ENCODE measurements at regions of chr2 and their contacts with region 1.

Region 1: DNA sequence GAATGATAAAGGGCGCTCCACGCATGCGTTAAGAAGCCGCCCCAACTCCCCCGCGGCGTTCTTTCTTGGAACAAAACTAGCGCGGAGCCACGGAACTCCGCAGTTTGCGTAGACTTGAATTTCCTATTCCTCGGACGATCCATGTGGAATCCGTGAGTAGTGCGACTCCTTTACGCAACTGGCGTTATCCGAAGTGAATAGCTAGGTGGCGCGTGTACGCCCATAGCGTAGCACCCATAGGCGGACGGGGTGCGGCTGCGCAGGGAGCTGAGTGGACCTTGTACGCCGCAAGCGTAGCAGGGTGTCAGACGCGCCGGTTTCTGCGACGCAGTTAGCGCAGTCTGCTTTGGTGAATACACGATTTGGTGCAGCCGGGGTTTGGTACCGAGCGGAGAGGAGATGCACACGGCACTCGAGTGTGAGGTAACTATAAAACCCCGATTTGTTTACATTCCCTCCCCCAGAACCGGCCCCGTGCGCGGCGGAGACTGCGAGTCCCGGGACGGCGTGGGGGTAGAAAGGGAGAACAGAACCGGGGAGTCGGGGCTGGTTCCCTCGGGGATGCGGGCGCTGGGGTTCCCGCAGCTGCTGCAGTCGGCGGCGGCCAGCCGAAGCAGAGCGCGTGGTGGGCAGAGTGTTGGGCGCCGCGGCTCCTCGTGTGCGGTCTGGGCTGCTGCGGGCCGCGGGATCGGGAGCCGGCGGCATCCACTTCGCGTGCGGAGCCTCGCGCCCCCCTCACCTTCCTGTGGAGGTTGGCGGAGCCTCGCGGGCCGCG is at the start of gene SLC39A10:
- DNase-seq: peak; percentile 99
- H3K4me3 Mint-ChIP-seq: peak within 1 kb of the TSS; percentile 98
- H3K27ac Mint-ChIP-seq: peak within 1 kb of the TSS; percentile 100
- H3K4me1 Mint-ChIP-seq: peaks cover 35% of the 10 kb centered on the region
- H3K27me3 Mint-ChIP-seq: peaks cover 3% of the 10 kb centered on the region
- total RNA-seq, gene SLC39A10: 36.1 to 37.4 TPM

Region 2: DNA sequence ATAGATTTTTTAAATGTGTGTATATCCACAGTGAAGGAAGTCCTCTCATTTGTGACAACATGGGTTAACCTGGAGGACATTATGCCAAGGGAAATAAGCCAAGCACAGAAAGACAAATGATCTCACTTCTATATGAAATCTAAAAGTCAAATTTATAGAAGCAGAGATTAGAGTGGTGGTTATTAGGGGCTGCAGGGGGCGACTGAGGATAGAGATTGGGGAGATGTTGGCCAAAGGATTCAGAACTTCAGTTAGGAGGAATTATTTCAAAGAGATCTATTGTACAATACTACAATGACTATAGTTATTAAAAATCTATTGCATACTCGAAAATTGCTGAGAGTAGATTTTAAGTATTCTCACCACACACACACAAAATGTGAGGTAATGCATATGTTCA is 252.4 kb before region 1 on chr2:
- CTCF ChIA-PET with region 1: interaction called, 4 read pairs
- POLR2A ChIA-PET with region 1: no interaction called
- intact Hi-C with region 1: loop called (anchors 2 kb)
- DNase-seq: no peak
- H3K4me3 Mint-ChIP-seq: no peak overlapping the region
- H3K27ac Mint-ChIP-seq: no peak overlapping the region
- H3K4me1 Mint-ChIP-seq: peaks cover 8% of the 10 kb centered on the region
- H3K27me3 Mint-ChIP-seq: no peaks in the 10 kb centered on the region

Region 3: GRCh38 chr2:195533771-195534642 is 123.0 kb before region 1 on chr2:
- CTCF ChIA-PET with region 1: interaction called, 60 read pairs
- POLR2A ChIA-PET with region 1: interaction called, 90 read pairs
- intact Hi-C with region 1: loop called (anchors 1 kb)
- DNase-seq: peak; percentile 87
- H3K4me3 Mint-ChIP-seq: peak overlapping the region; percentile 74
- H3K27ac Mint-ChIP-seq: peak overlapping the region; percentile 98
- H3K4me1 Mint-ChIP-seq: peaks cover 80% of the 10 kb centered on the region
- H3K27me3 Mint-ChIP-seq: no peaks in the 10 kb centered on the region

Region 4: GRCh38 chr2:195575879-195576401 is 81.1 kb before region 1 on chr2:
- CTCF ChIA-PET with region 1: interaction called, 19 read pairs
- POLR2A ChIA-PET with region 1: interaction called, 4 read pairs
- intact Hi-C with region 1: loop called (anchors 1 kb)
- DNase-seq: no peak
- H3K4me3 Mint-ChIP-seq: no peak overlapping the region
- H3K27ac Mint-ChIP-seq: peak overlapping the region; percentile 64
- H3K4me1 Mint-ChIP-seq: peaks cover 68% of the 10 kb centered on the region
- H3K27me3 Mint-ChIP-seq: no peaks in the 10 kb centered on the region

Region 5: GRCh38 chr2:195732574-195732973 is 75.5 kb after region 1 on chr2:
- CTCF ChIA-PET with region 1: no interaction called
- POLR2A ChIA-PET with region 1: no interaction called
- intact Hi-C with region 1: no loop called
- DNase-seq: no peak
- H3K4me3 Mint-ChIP-seq: no peak overlapping the region
- H3K27ac Mint-ChIP-seq: no peak overlapping the region
- H3K4me1 Mint-ChIP-seq: no peaks in the 10 kb centered on the region
- H3K27me3 Mint-ChIP-seq: no peaks in the 10 kb centered on the region

Region 6: GRCh38 chr2:196068271-196069209 is 411.5 kb after region 1 on chr2 and contains the start of gene DNAH7:
- CTCF ChIA-PET with region 1: interaction called, 12 read pairs
- POLR2A ChIA-PET with region 1: interaction called, 3 read pairs
- intact Hi-C with region 1: loop called (anchors 1 kb)
- DNase-seq: peak; percentile 95
- H3K4me3 Mint-ChIP-seq: peak within 1 kb of the TSS; percentile 88
- H3K27ac Mint-ChIP-seq: peak within 1 kb of the TSS; percentile 46
- H3K4me1 Mint-ChIP-seq: peaks cover 9% of the 10 kb centered on the region
- H3K27me3 Mint-ChIP-seq: peaks cover 2% of the 10 kb centered on the region
- total RNA-seq, gene DNAH7: 0.07 to 0.17 TPM